ENCODE measurements at regions of chr19 and their contacts with region 1.

Region 1: GRCh38 chr19:47035127-47036096 is 13.0 kb downstream of the TMEM160 start:
- DNase-seq: peak; percentile 96
- ATAC-seq: peak; percentile 95
- H3K4me3 Mint-ChIP-seq: peak overlapping the region; percentile 87
- H3K27ac Mint-ChIP-seq: peak overlapping the region; percentile 80
- H3K4me1 Mint-ChIP-seq: peaks cover 21% of the 10 kb centered on the region
- H3K27me3 Mint-ChIP-seq: peaks cover 16% of the 10 kb centered on the region

Region 2: DNA sequence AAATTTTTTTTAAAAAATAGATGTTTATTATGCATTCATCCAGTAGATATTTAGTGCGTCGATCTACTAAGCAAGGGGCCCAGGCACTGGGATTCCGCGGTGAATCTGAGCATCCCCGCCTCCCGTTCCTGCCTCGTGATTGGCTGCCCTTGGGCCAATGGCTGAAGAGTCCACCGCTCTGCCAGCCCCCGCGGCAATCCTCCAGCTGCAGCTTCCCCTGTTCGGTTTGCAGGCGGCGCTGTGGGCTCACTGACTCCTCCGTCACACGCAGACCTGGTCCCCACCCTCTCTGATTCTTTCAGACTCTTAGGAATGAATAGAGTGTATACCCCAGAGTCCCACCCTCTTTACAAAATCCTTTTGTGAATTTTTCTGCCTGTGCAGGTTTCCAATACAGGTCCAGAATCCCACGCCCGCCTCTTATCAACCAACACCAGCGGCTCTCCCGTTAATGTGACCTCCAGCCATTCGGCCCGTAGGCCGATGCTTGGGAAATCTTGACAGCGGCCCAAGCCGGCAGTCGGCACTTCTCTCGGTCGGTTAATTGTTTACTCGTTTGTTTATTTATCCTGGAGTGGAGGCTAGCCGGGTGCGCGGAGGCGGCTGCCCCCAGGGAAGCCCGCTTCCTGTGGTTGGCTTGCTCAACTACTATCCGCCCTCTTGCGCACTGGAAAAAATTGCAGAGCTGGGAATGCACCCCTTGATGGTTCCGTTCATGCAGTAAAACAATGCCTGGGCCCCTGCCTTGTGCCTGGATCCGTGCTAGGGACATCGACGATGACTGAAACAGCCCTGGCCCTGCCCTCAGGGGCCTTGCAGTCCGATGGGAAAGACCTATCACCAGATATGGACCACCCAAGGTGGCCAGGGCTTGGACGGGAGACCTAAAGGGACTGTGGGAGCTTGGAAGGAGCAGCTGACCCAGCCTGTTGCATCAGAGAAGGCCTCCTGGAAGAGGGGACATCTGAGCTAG is 179.1 kb before region 1 on chr19:
- CTCF ChIA-PET with region 1: interaction called, 17 read pairs
- POLR2A ChIA-PET with region 1: no interaction called
- DNase-seq: peak; percentile 95
- ATAC-seq: peak; percentile 64
- H3K4me3 Mint-ChIP-seq: peak overlapping the region; percentile 73
- H3K27ac Mint-ChIP-seq: peak overlapping the region; percentile 80
- H3K4me1 Mint-ChIP-seq: peaks cover 28% of the 10 kb centered on the region
- H3K27me3 Mint-ChIP-seq: peaks cover 7% of the 10 kb centered on the region

Region 3: GRCh38 chr19:46944918-46945628 is 90.3 kb before region 1 on chr19:
- CTCF ChIA-PET with region 1: no interaction called
- POLR2A ChIA-PET with region 1: no interaction called
- DNase-seq: no peak
- ATAC-seq: no peak
- H3K4me3 Mint-ChIP-seq: no peak overlapping the region
- H3K27ac Mint-ChIP-seq: peak overlapping the region; percentile 34
- H3K4me1 Mint-ChIP-seq: peaks cover 20% of the 10 kb centered on the region
- H3K27me3 Mint-ChIP-seq: no peaks in the 10 kb centered on the region

Region 4: DNA sequence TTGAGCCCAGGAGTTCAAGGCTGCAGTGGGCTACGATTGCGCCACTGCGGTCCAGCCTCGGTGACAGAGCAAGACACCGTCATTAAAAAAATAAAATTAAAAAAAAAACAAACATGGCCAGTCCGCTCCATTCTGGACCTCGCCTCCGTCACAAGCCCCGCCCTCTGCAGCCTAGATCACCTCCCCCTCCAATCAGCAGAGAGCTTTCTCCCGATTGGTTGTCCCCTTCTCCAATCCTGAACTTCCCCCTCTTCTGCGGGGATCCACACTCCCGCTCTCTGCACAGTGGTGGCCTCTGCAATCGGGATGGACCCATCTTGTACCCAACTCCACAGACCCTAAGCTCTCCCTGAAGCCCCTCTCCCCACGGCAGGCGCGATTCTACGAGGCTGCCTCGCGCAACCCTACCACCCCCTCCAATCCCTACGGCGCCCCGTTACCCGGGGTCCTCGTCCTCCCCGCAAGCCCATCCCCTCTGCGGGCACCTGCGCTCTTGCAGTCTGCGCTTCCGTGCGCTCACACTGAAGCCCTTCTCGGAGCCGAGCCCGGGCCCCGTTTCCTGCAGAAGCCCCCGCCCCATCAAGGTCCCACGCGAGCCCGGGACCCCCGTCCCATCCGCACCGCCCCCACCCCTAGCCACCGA is 12.5 kb after region 1 on chr19:
- CTCF ChIA-PET with region 1: interaction called, 13 read pairs
- POLR2A ChIA-PET with region 1: interaction called, 5 read pairs
- DNase-seq: peak; percentile 90
- ATAC-seq: peak; percentile 68
- H3K4me3 Mint-ChIP-seq: peak overlapping the region; percentile 94
- H3K27ac Mint-ChIP-seq: peak overlapping the region; percentile 95
- H3K4me1 Mint-ChIP-seq: peaks cover 21% of the 10 kb centered on the region
- H3K27me3 Mint-ChIP-seq: no peaks in the 10 kb centered on the region

Region 5: GRCh38 chr19:47124937-47125668 is 89.7 kb after region 1 on chr19:
- CTCF ChIA-PET with region 1: interaction called, 24 read pairs
- POLR2A ChIA-PET with region 1: no interaction called
- DNase-seq: peak; percentile 30
- ATAC-seq: peak; percentile 60
- H3K4me3 Mint-ChIP-seq: no peak overlapping the region
- H3K27ac Mint-ChIP-seq: no peak overlapping the region
- H3K4me1 Mint-ChIP-seq: peaks cover 13% of the 10 kb centered on the region
- H3K27me3 Mint-ChIP-seq: no peaks in the 10 kb centered on the region

Region 6: GRCh38 chr19:47130591-47131227 is 95.3 kb after region 1 on chr19 and contains the start of gene SAE1:
- CTCF ChIA-PET with region 1: interaction called, 24 read pairs
- POLR2A ChIA-PET with region 1: interaction called, 3 read pairs
- DNase-seq: peak; percentile 94
- ATAC-seq: peak; percentile 91
- H3K4me3 Mint-ChIP-seq: peak within 1 kb of the TSS; percentile 99
- H3K27ac Mint-ChIP-seq: peak within 1 kb of the TSS; percentile 98
- H3K4me1 Mint-ChIP-seq: peaks cover 51% of the 10 kb centered on the region
- H3K27me3 Mint-ChIP-seq: no peaks in the 10 kb centered on the region
- total RNA-seq, gene SAE1: 165 to 175 TPM

Region 7: DNA sequence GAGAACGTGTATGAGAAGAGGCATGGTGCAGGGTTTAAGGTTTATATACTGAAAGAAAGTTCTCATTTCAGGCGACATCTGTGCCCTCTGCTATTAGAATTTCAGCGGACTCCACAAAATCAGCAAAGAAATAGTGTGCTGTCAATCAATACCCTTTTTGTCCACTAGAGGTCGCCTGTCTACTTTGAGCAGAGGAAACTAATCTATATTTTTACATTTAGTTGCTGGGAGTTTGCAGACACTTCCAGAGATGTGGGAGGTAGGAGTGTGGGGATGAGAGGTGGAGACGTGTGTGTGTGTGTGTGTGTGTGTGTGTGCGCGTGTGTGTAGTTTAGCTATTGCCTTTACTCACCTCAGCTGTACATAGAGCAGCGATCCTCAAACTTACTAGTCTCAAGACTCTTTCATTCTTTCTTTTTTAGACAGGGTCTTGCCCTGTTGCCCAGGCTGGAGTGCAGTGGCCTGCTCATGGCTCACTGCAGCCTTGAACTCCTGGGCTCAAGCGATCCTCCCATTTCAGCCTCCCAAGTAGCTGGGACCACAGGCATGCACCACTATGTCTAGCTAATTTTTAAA is 249.0 kb after region 1 on chr19:
- CTCF ChIA-PET with region 1: no interaction called
- POLR2A ChIA-PET with region 1: no interaction called
- DNase-seq: peak; percentile 68
- ATAC-seq: peak; percentile 43
- H3K4me3 Mint-ChIP-seq: no peak overlapping the region
- H3K27ac Mint-ChIP-seq: no peak overlapping the region
- H3K4me1 Mint-ChIP-seq: peaks cover 7% of the 10 kb centered on the region
- H3K27me3 Mint-ChIP-seq: no peaks in the 10 kb centered on the region

Measured in activated CD8-positive, alpha-beta T cell treated with anti-CD3 and anti-CD28 coated beads, Interleukin-2, amount 10 ng/mL, durations not matched to agents 7 days and 5 days (primary cell).